ENCODE measurements at regions of chr20 and their contacts with region 1.

Region 1: GRCh38 chr20:49699200-49699992 is 14.3 kb downstream of the B4GALT5 start:
- DNase-seq: peak; percentile 44
- H3K4me3 Mint-ChIP-seq: no peak overlapping the region
- H3K27ac Mint-ChIP-seq: peak overlapping the region; percentile 75
- H3K4me1 Mint-ChIP-seq: peaks cover 67% of the 10 kb centered on the region
- H3K27me3 Mint-ChIP-seq: no peaks in the 10 kb centered on the region

Region 2: GRCh38 chr20:49676581-49677291 is 22.7 kb before region 1 on chr20:
- CTCF ChIA-PET with region 1: interaction called, 7 read pairs
- POLR2A ChIA-PET with region 1: interaction called, 9 read pairs
- intact Hi-C with region 1: loop called (anchors 1 kb)
- DNase-seq: peak; percentile 57
- H3K4me3 Mint-ChIP-seq: no peak overlapping the region
- H3K27ac Mint-ChIP-seq: peak overlapping the region; percentile 68
- H3K4me1 Mint-ChIP-seq: peaks cover 69% of the 10 kb centered on the region
- H3K27me3 Mint-ChIP-seq: no peaks in the 10 kb centered on the region

Region 3: GRCh38 chr20:49713753-49714712 is 14.6 kb after region 1 on chr20 and contains the start of gene B4GALT5:
- CTCF ChIA-PET with region 1: interaction called, 3 read pairs
- POLR2A ChIA-PET with region 1: interaction called, 4 read pairs
- intact Hi-C with region 1: loop called (anchors 2 kb)
- DNase-seq: peak; percentile 69
- H3K4me3 Mint-ChIP-seq: peak within 1 kb of the TSS; percentile 86
- H3K27ac Mint-ChIP-seq: peak within 1 kb of the TSS; percentile 83
- H3K4me1 Mint-ChIP-seq: peaks cover 45% of the 10 kb centered on the region
- H3K27me3 Mint-ChIP-seq: no peaks in the 10 kb centered on the region
- total RNA-seq, gene B4GALT5: 20.9 to 21.4 TPM

Region 4: DNA sequence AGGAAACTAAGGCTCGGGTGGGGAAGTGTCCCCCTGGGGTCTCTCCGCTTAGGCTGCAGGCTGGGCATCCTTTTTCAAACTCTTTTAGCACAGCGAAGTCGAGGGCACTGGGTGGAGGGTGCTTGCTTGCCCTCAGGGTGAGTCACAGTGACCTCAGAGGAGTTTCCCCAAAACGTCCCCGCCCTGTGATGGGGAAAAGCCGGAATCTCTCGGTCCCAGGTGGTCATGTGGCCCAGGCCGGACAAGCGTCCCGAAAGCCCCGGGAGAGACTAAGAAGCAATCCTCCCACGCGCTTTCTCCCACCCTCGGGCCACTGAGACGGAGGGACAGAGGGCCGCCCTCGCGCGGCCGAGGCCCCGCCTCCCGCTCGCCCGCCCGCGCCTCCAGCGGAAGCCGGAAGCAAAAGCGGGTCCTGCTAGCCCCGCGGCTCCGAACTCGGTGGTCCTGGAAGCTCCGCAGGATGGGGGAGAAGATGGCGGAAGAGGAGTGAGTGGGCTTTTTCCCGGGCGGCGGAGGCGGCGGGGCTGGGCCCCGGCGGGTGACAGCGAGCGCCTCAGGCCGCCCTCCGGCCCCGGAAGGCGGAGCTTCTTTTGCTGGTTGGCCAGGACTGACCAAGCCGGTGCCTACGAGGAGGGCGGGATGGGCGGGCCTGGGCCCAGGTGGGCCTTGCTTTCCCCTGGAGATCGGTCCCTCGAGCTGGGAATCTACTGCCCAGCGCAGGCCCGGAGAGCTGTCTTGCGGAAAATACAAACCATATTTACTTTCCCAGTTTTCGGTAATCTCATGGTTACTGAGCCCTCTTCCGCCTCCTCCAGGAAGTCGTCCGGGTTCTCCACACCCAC is 113.3 kb after region 1 on chr20 and contains the start of gene SLC9A8:
- CTCF ChIA-PET with region 1: no interaction called
- POLR2A ChIA-PET with region 1: no interaction called
- intact Hi-C with region 1: loop called (anchors 5 kb)
- DNase-seq: peak; percentile 92
- H3K4me3 Mint-ChIP-seq: peak within 1 kb of the TSS; percentile 89
- H3K27ac Mint-ChIP-seq: peak within 1 kb of the TSS; percentile 94
- H3K4me1 Mint-ChIP-seq: peaks cover 34% of the 10 kb centered on the region
- H3K27me3 Mint-ChIP-seq: no peaks in the 10 kb centered on the region
- total RNA-seq, gene SLC9A8: 11.5 to 13.0 TPM